Activated naive CD4-positive, alpha-beta T cell treated with anti-CD3 and anti-CD28 coated beads for 36 hours (primary cell): ENCODE measurements at regions of chr22 and their contacts with region 1.

Region 1: GRCh38 chr22:39932918-39933649 is 27.1 kb upstream of the TMA7B start:
- DNase-seq: peak; percentile 81
- H3K4me3 Mint-ChIP-seq: peak overlapping the region; percentile 78
- H3K27ac Mint-ChIP-seq: no peak overlapping the region
- H3K4me1 Mint-ChIP-seq: peaks cover 48% of the 10 kb centered on the region
- H3K27me3 Mint-ChIP-seq: no peaks in the 10 kb centered on the region

Region 2: DNA sequence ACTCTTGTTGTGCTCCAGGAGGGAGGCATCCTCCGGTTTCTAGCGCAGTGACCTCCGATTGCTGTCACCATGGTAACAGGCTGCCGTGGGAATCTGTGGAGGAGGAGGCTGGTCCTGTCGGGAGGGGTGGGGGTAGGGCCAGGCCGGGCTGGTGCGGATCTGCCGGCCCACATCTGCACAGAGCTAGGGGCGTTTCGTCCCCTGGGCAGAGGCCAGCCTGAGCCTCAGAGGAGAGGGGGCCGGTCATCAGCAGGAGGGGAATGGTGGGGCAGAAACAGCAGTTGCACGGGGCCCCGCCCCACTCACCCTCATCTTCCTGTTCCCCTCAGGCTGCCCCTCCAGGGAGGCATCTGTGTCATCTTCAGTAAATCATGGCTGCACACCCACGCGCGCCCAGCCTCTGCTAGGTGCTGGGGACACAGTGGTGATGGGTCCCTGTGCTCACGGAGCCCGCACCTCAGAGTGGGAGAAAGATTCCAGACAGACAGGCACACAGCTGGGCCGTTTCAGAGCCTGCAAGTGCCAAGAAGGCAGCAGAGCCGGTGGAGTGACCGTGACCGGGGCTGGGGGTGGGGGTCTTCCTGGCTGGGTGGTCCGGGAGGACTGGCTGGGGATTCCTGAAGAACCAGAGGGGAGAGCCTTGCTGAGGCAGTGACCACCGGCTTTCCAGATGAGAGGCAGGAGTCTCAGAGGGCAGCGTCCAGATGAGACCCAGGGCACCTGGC is 242.0 kb before region 1 on chr22:
- CTCF ChIA-PET with region 1: no interaction called
- intact Hi-C with region 1: no loop called
- DNase-seq: peak; percentile 37
- H3K4me3 Mint-ChIP-seq: no peak overlapping the region
- H3K27ac Mint-ChIP-seq: no peak overlapping the region
- H3K4me1 Mint-ChIP-seq: peaks cover 10% of the 10 kb centered on the region
- H3K27me3 Mint-ChIP-seq: peaks cover 4% of the 10 kb centered on the region

Region 3: GRCh38 chr22:39917776-39918495 is 15.1 kb before region 1 on chr22:
- CTCF ChIA-PET with region 1: interaction called, 35 read pairs
- intact Hi-C with region 1: loop called (anchors 1 kb)
- DNase-seq: no peak
- H3K4me3 Mint-ChIP-seq: peak overlapping the region; percentile 69
- H3K27ac Mint-ChIP-seq: peak overlapping the region; percentile 93
- H3K4me1 Mint-ChIP-seq: peaks cover 83% of the 10 kb centered on the region
- H3K27me3 Mint-ChIP-seq: no peaks in the 10 kb centered on the region

Region 4: GRCh38 chr22:40121461-40121860 is 188.4 kb after region 1 on chr22:
- CTCF ChIA-PET with region 1: no interaction called
- intact Hi-C with region 1: no loop called
- DNase-seq: no peak
- H3K4me3 Mint-ChIP-seq: no peak overlapping the region
- H3K27ac Mint-ChIP-seq: no peak overlapping the region
- H3K4me1 Mint-ChIP-seq: peaks cover 52% of the 10 kb centered on the region
- H3K27me3 Mint-ChIP-seq: no peaks in the 10 kb centered on the region